Transverse colon (tissue), 4 donors: ENCODE measurements at regions of chr3 and their contacts with region 1.

Region 1: DNA sequence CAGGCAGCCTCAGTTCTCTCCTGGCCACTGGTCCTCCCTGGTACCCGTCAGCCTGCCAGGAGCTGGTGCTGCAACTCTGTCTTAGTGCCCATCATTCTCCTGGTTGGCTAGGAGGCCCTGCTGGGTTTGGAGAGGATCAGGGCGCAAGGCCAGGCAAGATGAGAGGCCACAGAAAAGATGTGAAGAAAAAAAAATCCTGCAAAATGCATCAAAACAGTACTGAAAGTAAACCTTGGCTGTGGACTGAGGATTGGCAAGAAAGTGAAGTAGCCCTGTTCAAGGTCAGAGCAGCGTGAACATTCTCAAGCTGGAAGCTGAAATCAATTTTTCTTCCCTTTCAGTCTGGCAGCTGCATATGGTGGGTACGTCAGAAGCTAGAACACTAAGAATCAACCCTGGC is 74.2 kb downstream of the GTF2E1 start:
- DNase-seq: no peak
- H3K4me3 ChIP-seq: no peak overlapping the region
- H3K27ac ChIP-seq: no peak overlapping the region
- H3K4me1 ChIP-seq: peaks cover 0 to 11% (median 5%) of the 10 kb centered on the region in 4 donors
- H3K27me3 ChIP-seq: no peaks in the 10 kb centered on the region
- CTCF ChIP-seq: no peak
- EP300 ChIP-seq: no peak
- POLR2A ChIP-seq: no peak

Region 2: DNA sequence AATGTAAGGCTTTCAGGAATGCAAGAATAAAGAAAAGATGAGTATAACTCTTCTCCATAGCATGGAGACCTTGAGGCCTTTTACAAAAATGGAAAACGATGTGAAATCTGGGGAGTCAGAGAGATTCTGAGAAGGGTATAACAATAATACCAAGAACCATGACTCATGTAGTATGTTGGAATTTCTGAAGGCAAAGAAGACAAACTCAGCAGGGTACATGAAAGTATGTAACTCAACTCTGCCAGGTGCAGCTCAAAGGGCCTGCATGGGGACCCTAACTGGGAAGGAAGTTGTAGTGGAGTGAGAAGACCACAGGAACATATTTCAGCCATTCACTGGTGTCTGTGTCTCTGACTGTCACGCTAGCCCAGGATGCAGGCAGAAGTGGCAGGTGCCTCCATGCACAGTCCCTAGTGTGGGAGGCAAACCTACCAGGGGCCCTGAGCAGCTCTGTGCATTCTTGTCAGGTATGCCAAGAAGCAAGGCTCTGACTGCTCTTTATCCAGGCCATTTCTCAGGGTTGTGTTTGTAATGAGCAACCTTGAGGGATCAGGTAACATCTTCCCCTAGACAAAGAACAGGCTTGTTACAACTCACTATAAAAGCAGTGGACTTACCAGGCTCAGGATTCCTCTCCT is 588.9 kb before region 1 on chr3:
- in situ Hi-C with region 1: loop called in 1 of 4 experiments (anchors 25 kb)
- intact Hi-C with region 1: no loop called
- DNase-seq: no peak
- H3K4me3 ChIP-seq: no peak overlapping the region
- H3K27ac ChIP-seq: no peak overlapping the region
- H3K4me1 ChIP-seq: no peaks in the 10 kb centered on the region
- H3K27me3 ChIP-seq: no peaks in the 10 kb centered on the region
- CTCF ChIP-seq: no peak
- EP300 ChIP-seq: no peak
- POLR2A ChIP-seq: no peak

Region 3: DNA sequence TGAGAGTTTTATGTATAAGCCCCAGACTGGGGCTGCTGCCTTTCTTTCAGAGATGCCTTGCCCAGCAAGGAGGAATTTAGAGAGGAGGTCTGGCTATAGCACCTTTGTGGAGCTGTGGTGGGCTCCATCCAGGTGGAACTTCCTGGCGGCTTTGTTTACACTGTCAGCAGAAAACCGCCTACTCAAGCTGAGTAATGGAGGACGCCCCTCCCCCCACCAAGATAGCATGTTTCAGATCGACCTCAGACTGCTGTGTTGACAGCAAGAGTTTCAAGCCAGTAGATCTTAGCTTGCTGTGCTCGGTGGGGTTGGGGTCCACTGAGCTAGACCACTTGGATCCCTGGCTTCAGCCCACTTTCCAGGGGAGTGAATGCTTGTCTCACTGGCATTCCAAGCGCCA is 246.9 kb after region 1 on chr3:
- in situ Hi-C with region 1: no loop called
- intact Hi-C with region 1: no loop called
- DNase-seq: no peak
- H3K4me3 ChIP-seq: no peak overlapping the region
- H3K27ac ChIP-seq: no peak overlapping the region
- H3K4me1 ChIP-seq: no peaks in the 10 kb centered on the region
- H3K27me3 ChIP-seq: no peaks in the 10 kb centered on the region
- CTCF ChIP-seq: no peak
- EP300 ChIP-seq: no peak
- POLR2A ChIP-seq: no peak